ENCODE measurements at regions of chr9 and their contacts with region 1.

Region 1: GRCh38 chr9:130682490-130683121 is 11.0 kb upstream of the EXOSC2 start:
- DNase-seq: peak; percentile 74
- H3K4me3 ChIP-seq: no peak overlapping the region
- H3K27ac ChIP-seq: no peak overlapping the region
- H3K4me1 ChIP-seq: peaks cover 5% of the 10 kb centered on the region
- H3K27me3 ChIP-seq: no peaks in the 10 kb centered on the region
- CTCF ChIP-seq: peak; percentile 71 to 90 (median 84)
- POLR2A ChIP-seq: no peak

Region 2: DNA sequence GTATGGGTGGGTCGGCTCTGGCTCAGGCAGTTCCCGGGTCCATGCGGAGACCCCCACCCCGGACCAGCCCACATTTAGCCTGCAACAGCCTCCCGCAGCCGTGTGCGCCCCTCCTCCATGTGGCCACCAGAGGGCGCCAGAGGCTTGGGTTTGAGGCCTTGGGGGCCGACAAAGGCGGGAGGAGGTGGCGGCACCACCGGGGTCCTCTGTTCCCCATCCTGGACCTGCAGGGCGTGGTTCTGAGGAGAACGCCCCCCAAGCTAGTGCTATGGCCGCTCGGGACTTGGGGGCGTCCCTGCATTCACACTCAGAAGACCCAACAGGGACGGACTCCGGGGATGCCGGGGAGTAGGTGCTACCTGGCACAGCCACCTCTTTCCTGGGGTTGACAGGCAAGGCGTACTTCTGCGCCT is 221.4 kb before region 1 on chr9:
- intact Hi-C with region 1: loop called (anchors 1 kb)
- DNase-seq: peak; percentile 28
- H3K4me3 ChIP-seq: no peak overlapping the region
- H3K27ac ChIP-seq: no peak overlapping the region
- H3K4me1 ChIP-seq: no peaks in the 10 kb centered on the region
- H3K27me3 ChIP-seq: no peaks in the 10 kb centered on the region
- CTCF ChIP-seq: peak; percentile 85 to 95 (median 92)
- POLR2A ChIP-seq: no peak

Region 3: GRCh38 chr9:130578865-130579737 is 103.5 kb before region 1 on chr9 and contains the start of gene FUBP3:
- intact Hi-C with region 1: loop called (anchors 10 kb)
- DNase-seq: peak; percentile 92
- H3K4me3 ChIP-seq: peak within 1 kb of the TSS; percentile 96 to 99
- H3K27ac ChIP-seq: peak within 1 kb of the TSS; percentile 77 to 81
- H3K4me1 ChIP-seq: peaks cover 10% of the 10 kb centered on the region
- H3K27me3 ChIP-seq: no peaks in the 10 kb centered on the region
- CTCF ChIP-seq: peak in 1 of 4 experiments; percentile 16
- POLR2A ChIP-seq: peak; percentile 79
- total RNA-seq, gene FUBP3: 40.4 to 111 TPM

Region 4: GRCh38 chr9:131289301-131290038 is 606.9 kb after region 1 on chr9 and contains the start of gene PLPP7:
- intact Hi-C with region 1: no loop called
- DNase-seq: no peak
- H3K4me3 ChIP-seq: peak within 1 kb of the TSS; percentile 17 to 24
- H3K27ac ChIP-seq: peak within 1 kb of the TSS in 1 of 2 donors; percentile 33
- H3K4me1 ChIP-seq: no peaks in the 10 kb centered on the region
- H3K27me3 ChIP-seq: no peaks in the 10 kb centered on the region
- CTCF ChIP-seq: no peak
- POLR2A ChIP-seq: no peak
- total RNA-seq, gene PLPP7: 2.0 to 32.5 TPM